Heart left ventricle (tissue), 16 donors: ENCODE measurements at regions of chr17 and their contacts with region 1.

Region 1: DNA sequence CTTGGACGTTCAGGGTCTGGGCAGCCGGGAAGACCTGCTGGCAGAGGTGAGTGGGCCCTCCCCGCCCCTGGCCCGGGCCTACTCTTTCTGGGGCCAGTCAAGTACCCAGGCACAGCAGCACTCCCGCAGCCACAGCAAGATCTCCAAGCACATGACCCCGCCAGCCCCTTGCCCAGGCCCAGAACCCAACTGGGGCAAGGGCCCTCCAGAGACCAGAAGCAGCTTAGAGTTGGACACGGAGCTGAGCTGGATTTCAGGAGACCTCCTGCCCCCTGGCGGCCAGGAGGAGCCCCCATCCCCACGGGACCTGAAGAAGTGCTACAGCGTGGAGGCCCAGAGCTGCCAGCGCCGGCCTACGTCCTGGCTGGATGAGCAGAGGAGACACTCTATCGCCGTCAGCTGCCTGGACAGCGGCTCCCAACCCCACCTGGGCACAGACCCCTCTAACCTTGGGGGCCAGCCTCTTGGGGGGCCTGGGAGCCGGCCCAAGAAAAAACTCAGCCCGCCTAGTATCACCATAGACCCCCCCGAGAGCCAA is 8.6 kb upstream of the ABCC3 start:
- DNase-seq: peak; percentile 71 to 82 (median 77)
- ATAC-seq: peak; percentile 48 to 86 (median 82)
- H3K4me3 ChIP-seq: no peak overlapping the region
- H3K27ac ChIP-seq: no peak overlapping the region
- H3K4me1 ChIP-seq: peaks cover 0 to 19% (median 4%) of the 10 kb centered on the region in 12 donors
- H3K27me3 ChIP-seq: peaks cover 0 to 39% (median 9%) of the 10 kb centered on the region in 9 donors
- CTCF ChIP-seq: peak; percentile 74 to 88 (median 80)
- POLR2A ChIP-seq: no peak

Region 2: DNA sequence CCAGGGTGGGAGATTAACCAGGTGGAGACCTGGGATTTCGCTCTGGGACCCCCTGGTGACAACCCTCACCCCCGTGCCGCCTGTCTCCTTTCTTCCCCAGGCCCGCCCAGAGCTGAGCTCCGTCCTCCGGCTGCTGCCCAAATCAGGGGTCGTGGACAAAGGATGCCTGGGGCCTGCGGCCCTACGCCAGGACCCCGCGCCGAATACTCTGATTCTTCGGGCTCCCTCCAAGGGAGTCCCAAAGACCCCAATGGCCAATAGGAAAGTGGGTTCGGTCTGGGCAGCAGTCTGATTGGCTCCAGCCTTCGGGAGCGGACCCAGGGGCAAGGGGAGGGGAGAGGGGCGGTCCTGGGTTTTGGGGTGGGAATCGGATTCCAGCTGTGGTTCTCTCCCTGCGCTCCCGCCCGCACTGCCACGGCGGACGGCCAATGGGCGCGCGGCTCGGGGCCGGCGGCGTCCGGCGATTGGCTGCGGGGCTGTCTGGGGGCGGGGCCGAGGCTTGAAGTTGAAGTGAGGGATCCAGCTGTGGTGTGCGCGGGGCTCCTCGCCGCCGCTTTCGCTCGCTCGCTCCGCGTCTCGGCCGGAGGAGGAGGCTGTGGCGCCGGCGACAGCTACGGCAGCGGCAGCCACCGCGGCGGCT is 65.8 kb before region 1 on chr17 and contains the start of gene CACNA1G:
- intact Hi-C with region 1: no loop called
- DNase-seq: peak; percentile 88 to 94 (median 91)
- ATAC-seq: peak; percentile 87 to 95 (median 92)
- H3K4me3 ChIP-seq: peak within 1 kb of the TSS; percentile 28 to 65 (median 56)
- H3K27ac ChIP-seq: no peak within 1 kb of the TSS
- H3K4me1 ChIP-seq: peaks cover 12 to 49% (median 30%) of the 10 kb centered on the region in 12 donors
- H3K27me3 ChIP-seq: peaks cover 27 to 72% (median 49%) of the 10 kb centered on the region in 9 donors
- CTCF ChIP-seq: peak in 1 of 12 donors; percentile 13
- POLR2A ChIP-seq: no peak
- total RNA-seq, gene CACNA1G: 0.02 to 0.48 (median 0.14) TPM in 8 of 9 donors, not detected in the other

Region 3: GRCh38 chr17:50575581-50576210 is 50.4 kb before region 1 on chr17:
- intact Hi-C with region 1: no loop called
- DNase-seq: no peak
- ATAC-seq: no peak
- H3K4me3 ChIP-seq: no peak overlapping the region
- H3K27ac ChIP-seq: no peak overlapping the region
- H3K4me1 ChIP-seq: no peaks in the 10 kb centered on the region
- H3K27me3 ChIP-seq: no peaks in the 10 kb centered on the region
- CTCF ChIP-seq: no peak
- POLR2A ChIP-seq: no peak

Region 4: DNA sequence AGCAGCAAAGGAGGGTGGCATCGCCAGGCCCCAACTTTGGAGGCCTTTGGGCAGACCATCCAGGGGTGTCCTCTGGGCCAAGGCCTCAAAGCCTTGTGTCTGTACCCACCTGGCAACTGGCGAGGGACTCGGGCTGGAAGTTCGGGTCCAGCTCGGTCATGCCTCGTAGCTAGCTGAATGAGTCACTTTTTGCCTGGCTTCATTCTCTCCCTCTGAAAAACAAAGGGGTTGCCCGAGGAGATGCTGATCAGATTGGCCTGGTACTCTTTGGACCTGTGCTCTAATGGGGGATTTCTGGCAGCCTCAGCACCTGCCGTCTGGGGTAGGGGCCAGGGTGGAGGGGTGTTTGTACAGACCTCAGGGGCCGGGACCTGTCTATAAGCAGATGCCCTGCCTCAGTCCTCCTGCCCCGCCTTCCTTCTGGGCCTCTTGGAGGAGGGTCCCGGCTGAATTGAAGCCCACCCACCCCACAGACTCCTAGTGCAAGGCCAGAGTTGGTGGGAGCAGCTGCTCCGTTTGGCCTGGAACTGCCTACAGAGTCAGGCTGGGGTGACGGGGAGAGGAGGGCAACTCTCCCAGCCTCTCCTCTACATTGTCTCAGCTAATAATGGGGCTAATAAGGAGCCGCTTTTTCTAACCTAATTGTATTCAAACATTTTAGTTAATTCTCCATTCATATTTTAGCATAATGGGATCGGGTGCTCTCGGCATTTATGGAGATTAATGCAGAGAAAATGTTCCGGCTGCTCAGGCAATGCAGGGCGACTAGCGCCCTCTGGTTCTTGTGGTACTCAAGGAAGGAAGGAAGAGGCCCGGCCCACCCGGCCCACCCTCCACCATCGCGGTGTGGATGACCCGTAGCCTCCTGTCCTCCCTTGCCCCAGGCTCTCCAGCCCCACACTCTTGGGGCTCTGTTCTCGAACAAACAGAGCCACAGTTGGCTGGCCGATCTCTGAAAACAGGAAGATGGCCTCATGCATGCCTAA is 12.8 kb before region 1 on chr17:
- intact Hi-C with region 1: no loop called
- DNase-seq: no peak
- ATAC-seq: peak in 1 of 4 donors; percentile 38
- H3K4me3 ChIP-seq: no peak overlapping the region
- H3K27ac ChIP-seq: no peak overlapping the region
- H3K4me1 ChIP-seq: peaks cover 0 to 7% (median 0%) of the 10 kb centered on the region in 12 donors
- H3K27me3 ChIP-seq: peaks cover 0 to 16% (median 0%) of the 10 kb centered on the region in 9 donors
- CTCF ChIP-seq: peak in 11 of 12 donors; percentile 16 to 60 (median 45)
- POLR2A ChIP-seq: no peak

Region 5: GRCh38 chr17:50681263-50682210 is 55.4 kb after region 1 on chr17:
- intact Hi-C with region 1: loop called in 8 of 10 experiments (anchors 2 to 5 kb)
- DNase-seq: peak in 3 of 5 donors; percentile 43 to 54 (median 51)
- ATAC-seq: peak; percentile 29 to 72 (median 66)
- H3K4me3 ChIP-seq: peak overlapping the region in 3 of 12 donors; percentile 0 to 19 (median 17)
- H3K27ac ChIP-seq: peak overlapping the region in 1 of 12 donors; percentile 66
- H3K4me1 ChIP-seq: peaks cover 0 to 9% (median 5%) of the 10 kb centered on the region in 12 donors
- H3K27me3 ChIP-seq: no peaks in the 10 kb centered on the region
- CTCF ChIP-seq: peak; percentile 32 to 65 (median 47)
- POLR2A ChIP-seq: no peak